ENCODE measurements at regions of chr6 and their contacts with region 1.

Region 1: DNA sequence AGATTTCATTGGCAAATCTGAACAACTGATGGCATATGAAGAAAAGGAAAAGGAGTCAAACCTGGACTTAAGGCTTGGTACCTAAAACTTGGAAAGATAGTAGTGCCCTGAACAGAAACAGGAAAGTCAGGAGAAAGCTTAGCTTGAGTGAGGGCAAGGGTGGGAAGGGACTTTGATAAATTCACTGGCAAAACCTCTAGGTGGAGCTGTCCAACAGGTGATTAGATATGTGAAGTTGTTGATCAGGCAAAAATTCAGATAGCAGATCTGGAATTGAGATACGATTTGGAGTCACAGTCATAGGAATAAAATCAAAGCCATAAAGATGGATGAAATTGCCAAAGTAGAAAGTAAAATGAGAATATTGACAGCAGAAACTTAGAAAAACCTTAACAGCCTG is 16.1 kb upstream of the ZNF292 start:
- DNase-seq: peak in 1 of 2 donors; percentile 84
- ATAC-seq: peak; percentile 77 to 89 (median 89)
- H3K4me3 ChIP-seq: no peak overlapping the region
- H3K4me3 Mint-ChIP-seq: no peak overlapping the region
- H3K27ac ChIP-seq: no peak overlapping the region
- H3K27ac Mint-ChIP-seq: no peak overlapping the region
- H3K4me1 ChIP-seq: no peaks in the 10 kb centered on the region
- H3K4me1 Mint-ChIP-seq: peaks cover 0 to 5% of the 10 kb centered on the region in 2 donors
- H3K27me3 ChIP-seq: peaks cover 2% of the 10 kb centered on the region
- H3K27me3 Mint-ChIP-seq: peaks cover 26 to 40% of the 10 kb centered on the region in 2 donors
- CTCF ChIP-seq: peak; percentile 88

Region 2: DNA sequence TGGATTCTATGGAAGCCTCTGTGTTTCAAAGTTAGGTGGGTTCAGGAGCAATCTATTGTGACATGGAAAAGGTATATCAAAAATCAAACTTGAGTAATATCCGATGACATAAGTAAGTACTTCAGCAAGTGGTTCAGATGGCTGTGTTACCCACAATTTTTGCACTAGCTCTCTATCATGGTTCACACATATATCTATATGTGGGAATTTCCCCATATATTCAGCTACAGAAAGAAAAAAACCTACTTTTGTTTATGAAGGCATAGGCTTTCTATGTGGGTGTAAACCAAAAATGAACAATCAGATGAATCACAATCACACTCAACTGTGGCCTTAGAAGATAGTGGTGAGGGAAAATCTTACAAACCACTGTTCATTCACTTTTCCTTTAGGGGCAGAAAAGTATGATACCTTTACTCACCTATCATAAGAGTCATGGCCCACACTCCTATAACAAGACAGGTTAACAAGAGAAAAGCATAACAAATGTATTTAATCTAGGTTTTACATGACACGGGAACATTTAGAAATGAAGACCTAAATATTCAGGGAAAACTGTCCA is 651.5 kb before region 1 on chr6:
- intact Hi-C with region 1: no loop called
- DNase-seq: no peak
- ATAC-seq: no peak
- H3K4me3 ChIP-seq: no peak overlapping the region
- H3K4me3 Mint-ChIP-seq: no peak overlapping the region
- H3K27ac ChIP-seq: no peak overlapping the region
- H3K27ac Mint-ChIP-seq: no peak overlapping the region
- H3K4me1 ChIP-seq: no peaks in the 10 kb centered on the region
- H3K4me1 Mint-ChIP-seq: no peaks in the 10 kb centered on the region
- H3K27me3 ChIP-seq: no peaks in the 10 kb centered on the region
- H3K27me3 Mint-ChIP-seq: no peaks in the 10 kb centered on the region
- CTCF ChIP-seq: no peak

Region 3: DNA sequence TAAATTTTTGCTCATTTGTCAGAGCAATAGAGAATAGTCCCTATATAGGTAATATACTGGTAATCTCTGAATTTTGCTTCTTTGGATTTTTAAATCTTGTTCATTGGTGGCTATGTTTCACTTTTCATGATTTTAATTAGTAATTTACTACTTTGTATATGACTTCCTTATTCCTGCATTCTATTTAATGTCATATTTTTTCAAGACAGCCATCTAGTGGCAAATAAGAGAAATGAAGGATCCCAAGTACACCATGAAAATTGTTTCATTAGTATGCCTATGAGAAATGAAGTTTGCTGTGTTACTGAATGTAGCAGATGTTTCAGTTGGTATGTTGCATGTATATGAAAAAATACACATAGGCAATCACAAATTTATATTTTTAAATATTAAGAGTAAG is 98.6 kb after region 1 on chr6:
- intact Hi-C with region 1: loop called (anchors 1 kb)
- DNase-seq: peak in 1 of 2 donors; percentile 50
- ATAC-seq: peak in 2 of 3 donors; percentile 64 to 76
- H3K4me3 ChIP-seq: no peak overlapping the region
- H3K4me3 Mint-ChIP-seq: no peak overlapping the region
- H3K27ac ChIP-seq: no peak overlapping the region
- H3K27ac Mint-ChIP-seq: peak overlapping the region in 1 of 2 donors; percentile 45
- H3K4me1 ChIP-seq: no peaks in the 10 kb centered on the region
- H3K4me1 Mint-ChIP-seq: peaks cover 0 to 4% of the 10 kb centered on the region in 2 donors
- H3K27me3 ChIP-seq: no peaks in the 10 kb centered on the region
- H3K27me3 Mint-ChIP-seq: no peaks in the 10 kb centered on the region
- CTCF ChIP-seq: peak; percentile 68

Measured in natural killer cell (primary cell).